B cell (primary cell): ENCODE measurements at regions of chr4 and their contacts with region 1.

Region 1: DNA sequence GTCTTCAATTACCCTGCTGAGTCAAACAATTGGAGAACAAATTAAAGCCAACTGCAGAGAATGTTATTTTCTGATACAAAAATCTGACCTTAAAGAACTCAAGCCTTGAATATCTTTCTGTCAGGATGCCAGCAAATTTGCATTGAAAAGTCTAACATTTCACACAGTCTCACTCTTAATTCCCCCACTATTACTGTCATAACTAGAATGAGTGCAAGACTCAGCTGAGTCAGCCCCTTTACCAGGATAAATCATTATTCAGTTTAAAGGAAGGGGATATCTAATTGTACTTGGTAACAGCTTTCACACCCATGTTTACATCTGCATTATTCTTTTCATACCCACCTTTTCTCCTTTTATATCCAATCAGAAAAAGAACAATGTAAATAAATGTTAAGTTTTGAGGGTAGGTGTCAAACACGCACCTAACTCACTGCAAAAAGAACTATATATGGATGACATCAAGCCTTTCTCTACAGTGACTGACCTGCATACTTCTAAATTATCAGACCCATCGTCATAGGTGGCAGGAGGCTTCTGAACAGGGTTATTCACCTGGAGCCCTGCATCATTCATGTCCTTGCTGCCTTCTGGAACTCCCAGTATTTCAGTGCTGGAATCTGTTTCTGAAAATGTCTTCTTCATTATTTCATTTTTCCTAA is 117.4 kb downstream of the TMA16 start:
- DNase-seq: no peak
- ATAC-seq: peak; percentile 35
- H3K4me3 ChIP-seq: peak overlapping the region; percentile 74 to 96 (median 87)
- H3K4me3 Mint-ChIP-seq: peak overlapping the region; percentile 91
- H3K27ac ChIP-seq: peak overlapping the region; percentile 80 to 88
- H3K27ac Mint-ChIP-seq: peak overlapping the region; percentile 87
- H3K4me1 ChIP-seq: peaks cover 39 to 42% of the 10 kb centered on the region in 2 donors
- H3K4me1 Mint-ChIP-seq: peaks cover 50% of the 10 kb centered on the region
- H3K27me3 ChIP-seq: no peaks in the 10 kb centered on the region
- H3K27me3 Mint-ChIP-seq: no peaks in the 10 kb centered on the region
- CTCF ChIP-seq: no peak

Region 2: GRCh38 chr4:163175971-163176958 is 435.6 kb before region 1 on chr4:
- CTCF ChIA-PET with region 1: no interaction called
- POLR2A ChIA-PET with region 1: no interaction called
- intact Hi-C with region 1: no loop called
- DNase-seq: no peak
- ATAC-seq: no peak
- H3K4me3 ChIP-seq: no peak overlapping the region
- H3K4me3 Mint-ChIP-seq: no peak overlapping the region
- H3K27ac ChIP-seq: no peak overlapping the region
- H3K27ac Mint-ChIP-seq: no peak overlapping the region
- H3K4me1 ChIP-seq: no peaks in the 10 kb centered on the region
- H3K4me1 Mint-ChIP-seq: no peaks in the 10 kb centered on the region
- H3K27me3 ChIP-seq: peaks cover 0 to 20% (median 10%) of the 10 kb centered on the region in 4 experiments
- H3K27me3 Mint-ChIP-seq: peaks cover 26% of the 10 kb centered on the region
- CTCF ChIP-seq: no peak

Region 3: DNA sequence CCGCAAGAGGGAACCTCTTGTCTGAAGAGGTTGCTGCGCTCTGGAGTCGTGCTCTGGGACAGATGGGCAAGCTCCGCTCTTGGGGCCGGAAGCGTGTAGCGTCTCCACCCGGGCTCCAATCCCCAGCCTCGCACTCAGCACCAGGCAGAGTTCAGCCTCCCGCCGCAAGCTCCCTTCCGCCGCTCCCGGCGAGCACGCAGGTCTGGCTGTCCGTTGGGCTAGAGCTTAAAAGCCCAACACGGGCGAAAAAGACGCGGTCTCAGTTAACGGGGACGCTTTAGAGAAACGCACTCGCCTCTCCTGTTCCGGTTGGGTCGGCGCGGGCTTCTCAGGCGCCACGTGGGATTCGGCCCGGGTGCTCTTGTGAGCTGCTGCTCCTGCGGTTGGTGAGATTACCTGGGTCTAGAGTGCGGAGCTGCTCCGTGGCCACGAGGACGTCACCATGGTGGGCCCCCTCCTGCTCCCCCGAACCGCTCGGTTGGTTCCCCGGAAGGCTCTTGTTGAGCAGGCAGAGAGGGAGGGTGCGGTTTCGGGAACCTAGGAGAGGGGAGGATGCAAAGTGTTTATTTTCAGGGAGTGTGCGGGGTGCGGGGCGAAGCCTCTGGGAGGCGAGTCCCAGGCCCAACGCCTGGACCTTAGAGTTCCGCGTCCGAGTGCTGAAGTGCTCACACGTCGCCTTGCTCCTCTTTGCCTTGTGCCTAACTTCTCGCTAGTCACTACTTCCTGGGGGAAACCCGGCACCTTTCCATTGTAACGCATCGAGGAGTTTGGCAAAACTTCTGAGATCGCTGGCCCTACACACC is 117.4 kb before region 1 on chr4 and contains the start of gene TMA16:
- CTCF ChIA-PET with region 1: interaction called, 7 read pairs
- POLR2A ChIA-PET with region 1: interaction called, 10 read pairs
- intact Hi-C with region 1: loop called (anchors 2 kb)
- DNase-seq: peak; percentile 90
- ATAC-seq: peak; percentile 67
- H3K4me3 ChIP-seq: peak within 1 kb of the TSS; percentile 68 to 99 (median 96)
- H3K4me3 Mint-ChIP-seq: peak within 1 kb of the TSS; percentile 99
- H3K27ac ChIP-seq: peak within 1 kb of the TSS; percentile 80 to 81
- H3K27ac Mint-ChIP-seq: peak within 1 kb of the TSS; percentile 100
- H3K4me1 ChIP-seq: peaks cover 21 to 28% of the 10 kb centered on the region in 2 donors
- H3K4me1 Mint-ChIP-seq: peaks cover 42% of the 10 kb centered on the region
- H3K27me3 ChIP-seq: no peaks in the 10 kb centered on the region
- H3K27me3 Mint-ChIP-seq: no peaks in the 10 kb centered on the region
- CTCF ChIP-seq: no peak
- total RNA-seq, gene TMA16: 40.5 and 49.0 TPM in 2 replicates

Region 4: GRCh38 chr4:163582703-163583102 is 29.2 kb before region 1 on chr4:
- CTCF ChIA-PET with region 1: interaction called, 9 read pairs
- POLR2A ChIA-PET with region 1: interaction called, 4 read pairs
- intact Hi-C with region 1: loop called (anchors 5 kb)
- DNase-seq: no peak
- ATAC-seq: no peak
- H3K4me3 ChIP-seq: no peak overlapping the region
- H3K4me3 Mint-ChIP-seq: no peak overlapping the region
- H3K27ac ChIP-seq: peak overlapping the region in 1 of 2 donors; percentile 30
- H3K27ac Mint-ChIP-seq: peak overlapping the region; percentile 33
- H3K4me1 ChIP-seq: peaks cover 33 to 61% of the 10 kb centered on the region in 2 donors
- H3K4me1 Mint-ChIP-seq: peaks cover 68% of the 10 kb centered on the region
- H3K27me3 ChIP-seq: no peaks in the 10 kb centered on the region
- H3K27me3 Mint-ChIP-seq: no peaks in the 10 kb centered on the region
- CTCF ChIP-seq: no peak

Region 5: DNA sequence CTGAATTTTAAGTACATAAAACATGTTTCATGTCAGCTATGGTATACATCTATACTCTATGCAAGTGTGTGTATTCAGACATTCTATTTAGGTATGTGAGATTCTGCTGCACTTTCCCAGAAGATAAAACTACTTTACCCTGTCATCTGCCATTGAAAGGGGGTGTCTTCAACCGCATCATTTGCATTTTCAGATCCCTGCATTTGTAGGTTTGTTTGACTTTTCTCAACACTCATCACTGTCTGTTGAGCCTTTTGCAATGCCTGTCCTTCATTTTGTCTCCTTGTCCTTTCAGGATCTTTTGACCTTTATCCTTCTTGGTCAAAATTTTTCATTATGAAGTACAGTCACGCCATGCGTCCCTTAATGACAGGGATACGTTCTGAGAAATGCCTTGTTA is 13.9 kb before region 1 on chr4:
- CTCF ChIA-PET with region 1: interaction called, 31 read pairs
- POLR2A ChIA-PET with region 1: interaction called, 3 read pairs
- intact Hi-C with region 1: loop called (anchors 1 kb)
- DNase-seq: peak; percentile 32
- ATAC-seq: peak; percentile 62
- H3K4me3 ChIP-seq: peak overlapping the region in 2 of 5 experiments; percentile 4 to 41
- H3K4me3 Mint-ChIP-seq: peak overlapping the region; percentile 62
- H3K27ac ChIP-seq: peak overlapping the region in 1 of 2 donors; percentile 77
- H3K27ac Mint-ChIP-seq: peak overlapping the region; percentile 85
- H3K4me1 ChIP-seq: peaks cover 55 to 78% of the 10 kb centered on the region in 2 donors
- H3K4me1 Mint-ChIP-seq: peaks cover 66% of the 10 kb centered on the region
- H3K27me3 ChIP-seq: no peaks in the 10 kb centered on the region
- H3K27me3 Mint-ChIP-seq: no peaks in the 10 kb centered on the region
- CTCF ChIP-seq: no peak

Region 6: GRCh38 chr4:163681208-163681821 is 69.4 kb after region 1 on chr4:
- CTCF ChIA-PET with region 1: interaction called, 24 read pairs
- POLR2A ChIA-PET with region 1: interaction called, 3 read pairs
- intact Hi-C with region 1: no loop called
- DNase-seq: peak; percentile 80
- ATAC-seq: peak; percentile 85
- H3K4me3 ChIP-seq: no peak overlapping the region
- H3K4me3 Mint-ChIP-seq: no peak overlapping the region
- H3K27ac ChIP-seq: no peak overlapping the region
- H3K27ac Mint-ChIP-seq: peak overlapping the region; percentile 74
- H3K4me1 ChIP-seq: peaks cover 6 to 11% of the 10 kb centered on the region in 2 donors
- H3K4me1 Mint-ChIP-seq: peaks cover 24% of the 10 kb centered on the region
- H3K27me3 ChIP-seq: no peaks in the 10 kb centered on the region
- H3K27me3 Mint-ChIP-seq: no peaks in the 10 kb centered on the region
- CTCF ChIP-seq: peak; percentile 87

Region 7: GRCh38 chr4:164188216-164188615 is 576.3 kb after region 1 on chr4:
- CTCF ChIA-PET with region 1: no interaction called
- POLR2A ChIA-PET with region 1: no interaction called
- intact Hi-C with region 1: no loop called
- DNase-seq: no peak
- ATAC-seq: no peak
- H3K4me3 ChIP-seq: no peak overlapping the region
- H3K4me3 Mint-ChIP-seq: no peak overlapping the region
- H3K27ac ChIP-seq: no peak overlapping the region
- H3K27ac Mint-ChIP-seq: no peak overlapping the region
- H3K4me1 ChIP-seq: no peaks in the 10 kb centered on the region
- H3K4me1 Mint-ChIP-seq: no peaks in the 10 kb centered on the region
- H3K27me3 ChIP-seq: no peaks in the 10 kb centered on the region
- H3K27me3 Mint-ChIP-seq: no peaks in the 10 kb centered on the region
- CTCF ChIP-seq: no peak